Endothelial cell of umbilical vein (primary cell): ENCODE measurements at regions of chr20 and their contacts with region 1.

Region 1: GRCh38 chr20:24106150-24106800 is 117.7 kb upstream of the GGTLC1 start:
- DNase-seq: peak; percentile 61
- H3K4me3 ChIP-seq: no peak overlapping the region
- H3K27ac ChIP-seq: peak overlapping the region; percentile 62
- H3K4me1 ChIP-seq: peaks cover 46% of the 10 kb centered on the region
- H3K27me3 ChIP-seq: no peaks in the 10 kb centered on the region
- CTCF ChIP-seq: no peak
- POLR2A ChIP-seq: no peak

Region 2: GRCh38 chr20:24089576-24089975 is 16.7 kb before region 1 on chr20:
- CTCF ChIA-PET with region 1: no interaction called
- POLR2A ChIA-PET with region 1: no interaction called
- dilution Hi-C with region 1: no loop called
- intact Hi-C with region 1: no loop called
- DNase-seq: no peak
- H3K4me3 ChIP-seq: no peak overlapping the region
- H3K27ac ChIP-seq: no peak overlapping the region
- H3K4me1 ChIP-seq: no peaks in the 10 kb centered on the region
- H3K27me3 ChIP-seq: peaks cover 0 to 4% of the 10 kb centered on the region in 2 experiments
- CTCF ChIP-seq: no peak
- POLR2A ChIP-seq: no peak

Region 3: GRCh38 chr20:24118441-24119175 is 12.3 kb after region 1 on chr20:
- CTCF ChIA-PET with region 1: interaction called, 26 read pairs
- POLR2A ChIA-PET with region 1: no interaction called
- dilution Hi-C with region 1: no loop called
- intact Hi-C with region 1: loop called (anchors 1 kb)
- DNase-seq: peak; percentile 90
- H3K4me3 ChIP-seq: no peak overlapping the region
- H3K27ac ChIP-seq: peak overlapping the region; percentile 27
- H3K4me1 ChIP-seq: peaks cover 41% of the 10 kb centered on the region
- H3K27me3 ChIP-seq: no peaks in the 10 kb centered on the region
- CTCF ChIP-seq: no peak
- POLR2A ChIP-seq: no peak

Region 4: DNA sequence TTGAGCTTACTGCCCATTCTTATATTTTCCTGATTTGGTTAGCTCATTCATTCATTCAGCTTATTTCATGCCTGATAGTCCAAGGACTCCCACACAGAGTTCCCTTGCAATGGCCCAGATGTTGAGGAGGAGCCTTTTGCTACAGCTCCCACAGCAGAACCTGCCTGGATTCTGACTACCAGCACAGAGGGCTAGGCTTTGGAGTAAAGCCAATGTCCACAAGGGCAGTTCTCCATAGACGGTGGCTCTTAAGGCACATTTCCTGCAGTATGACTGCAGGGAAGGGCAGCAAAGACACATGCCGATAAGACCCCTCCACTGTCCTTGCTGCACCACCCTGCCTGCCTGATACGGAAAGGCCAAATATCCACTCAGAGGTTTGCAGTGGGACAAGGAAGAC is 250.9 kb after region 1 on chr20:
- CTCF ChIA-PET with region 1: no interaction called
- POLR2A ChIA-PET with region 1: no interaction called
- dilution Hi-C with region 1: no loop called
- intact Hi-C with region 1: no loop called
- DNase-seq: no peak
- H3K4me3 ChIP-seq: no peak overlapping the region
- H3K27ac ChIP-seq: no peak overlapping the region
- H3K4me1 ChIP-seq: no peaks in the 10 kb centered on the region
- H3K27me3 ChIP-seq: no peaks in the 10 kb centered on the region
- CTCF ChIP-seq: no peak
- POLR2A ChIP-seq: no peak